ENCODE measurements at regions of chrX and their contacts with region 1.

Region 1: GRCh38 chrX:44244008-44244407 is 99.5 kb downstream of the EFHC2 start:
- DNase-seq: no peak
- H3K4me3 ChIP-seq: no peak overlapping the region
- H3K27ac ChIP-seq: no peak overlapping the region
- H3K4me1 ChIP-seq: no peaks in the 10 kb centered on the region
- H3K27me3 ChIP-seq: no peaks in the 10 kb centered on the region
- CTCF ChIP-seq: peak in 2 of 3 donors; percentile 34 to 37
- EP300 ChIP-seq: no peak
- POLR2A ChIP-seq: no peak

Region 2: GRCh38 chrX:43557792-43558191 is 686.2 kb before region 1 on chrX:
- intact Hi-C with region 1: loop called in 1 of 4 experiments (anchors 10 kb)
- DNase-seq: peak; percentile 14 to 57 (median 53)
- H3K4me3 ChIP-seq: no peak overlapping the region
- H3K27ac ChIP-seq: no peak overlapping the region
- H3K4me1 ChIP-seq: no peaks in the 10 kb centered on the region
- H3K27me3 ChIP-seq: no peaks in the 10 kb centered on the region
- CTCF ChIP-seq: peak in 1 of 3 donors; percentile 31
- EP300 ChIP-seq: no peak
- POLR2A ChIP-seq: no peak

Region 3: GRCh38 chrX:43958529-43958928 is 285.5 kb before region 1 on chrX:
- intact Hi-C with region 1: loop called in 3 of 4 experiments (anchors 5 to 10 kb)
- DNase-seq: peak in 2 of 5 donors; percentile 30 to 39
- H3K4me3 ChIP-seq: no peak overlapping the region
- H3K27ac ChIP-seq: peak overlapping the region in 1 of 2 donors; percentile 8
- H3K4me1 ChIP-seq: peaks cover 12% of the 10 kb centered on the region
- H3K27me3 ChIP-seq: no peaks in the 10 kb centered on the region
- CTCF ChIP-seq: peak in 2 of 3 donors; percentile 75 to 77
- EP300 ChIP-seq: no peak
- POLR2A ChIP-seq: no peak

Region 4: DNA sequence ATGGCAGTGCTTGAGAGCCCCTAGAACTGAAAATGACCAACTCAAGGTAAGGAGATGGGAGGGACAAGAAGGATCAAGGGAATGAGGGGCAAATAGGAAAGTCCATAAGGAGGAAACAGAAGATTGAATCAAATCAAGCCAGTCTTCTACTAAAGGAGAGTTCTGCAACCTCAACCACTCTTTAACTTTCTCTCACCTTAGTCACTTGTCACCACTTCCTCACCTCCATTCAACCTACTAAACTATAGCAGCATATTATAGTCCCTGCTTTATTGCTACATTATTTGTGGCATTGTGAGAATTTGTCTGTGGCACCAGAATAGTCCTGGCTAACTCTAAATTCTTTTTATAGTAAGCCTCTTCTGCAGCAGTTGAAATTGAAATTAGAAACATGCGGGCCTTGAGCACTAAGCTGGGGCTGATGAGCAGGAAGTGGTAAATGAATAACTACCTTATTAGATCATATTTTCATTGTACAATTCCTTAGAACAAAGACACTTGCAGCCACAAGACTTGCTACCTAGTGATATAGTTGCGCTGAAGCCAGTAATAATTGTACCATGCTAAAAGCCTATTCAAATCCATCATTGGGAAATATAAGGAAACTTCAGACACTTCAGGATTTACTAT is 1964.3 kb after region 1 on chrX:
- intact Hi-C with region 1: no loop called
- DNase-seq: no peak
- H3K4me3 ChIP-seq: no peak overlapping the region
- H3K27ac ChIP-seq: no peak overlapping the region
- H3K4me1 ChIP-seq: no peaks in the 10 kb centered on the region
- H3K27me3 ChIP-seq: no peaks in the 10 kb centered on the region
- CTCF ChIP-seq: no peak
- EP300 ChIP-seq: no peak
- POLR2A ChIP-seq: no peak